ENCODE measurements at regions of chr7 and their contacts with region 1.

Region 1: GRCh38 chr7:16867328-16867727 is 14.5 kb downstream of the AGR3 start:
- DNase-seq: no peak
- H3K4me3 Mint-ChIP-seq: no peak overlapping the region
- H3K27ac Mint-ChIP-seq: no peak overlapping the region
- H3K4me1 Mint-ChIP-seq: no peaks in the 10 kb centered on the region
- H3K27me3 Mint-ChIP-seq: no peaks in the 10 kb centered on the region
- CTCF ChIP-seq: no peak

Region 2: DNA sequence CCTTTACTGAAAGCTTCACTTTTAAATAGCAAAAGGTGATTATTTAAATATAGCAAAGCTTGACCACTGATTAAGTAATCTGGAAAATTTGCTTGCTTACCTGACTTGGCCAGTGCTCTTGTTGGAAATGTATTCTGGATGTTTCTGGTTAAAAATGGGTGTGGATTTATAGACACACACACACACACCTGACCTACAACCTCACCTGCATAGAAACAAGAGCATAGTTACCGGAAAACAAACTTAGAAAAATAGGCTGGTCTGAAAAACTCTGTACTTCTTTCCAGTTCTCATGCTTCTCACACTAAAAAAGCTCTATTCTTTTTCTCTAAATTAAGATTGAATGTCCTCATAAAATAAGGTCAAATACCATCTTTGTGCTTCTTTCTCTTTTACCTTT is 14.5 kb after region 1 on chr7 and contains the start of gene AGR3:
- CTCF ChIA-PET with region 1: interaction called, 18 read pairs
- intact Hi-C with region 1: no loop called
- DNase-seq: peak; percentile 51
- H3K4me3 Mint-ChIP-seq: no peak within 1 kb of the TSS
- H3K27ac Mint-ChIP-seq: peak within 1 kb of the TSS; percentile 60
- H3K4me1 Mint-ChIP-seq: peaks cover 14% of the 10 kb centered on the region
- H3K27me3 Mint-ChIP-seq: no peaks in the 10 kb centered on the region
- CTCF ChIP-seq: no peak
- total RNA-seq, gene AGR3: 8.4 and 11.0 TPM in 2 replicates

Measured in Calu3 (cell line).